Activated CD4-positive, alpha-beta T cell treated with anti-CD3 and anti-CD28 coated beads, Interleukin-2, amount 10 ng/mL, durations not matched to agents 24 days and 14 days (primary cell): ENCODE measurements at regions of chr1 and their contacts with region 1.

Region 1: DNA sequence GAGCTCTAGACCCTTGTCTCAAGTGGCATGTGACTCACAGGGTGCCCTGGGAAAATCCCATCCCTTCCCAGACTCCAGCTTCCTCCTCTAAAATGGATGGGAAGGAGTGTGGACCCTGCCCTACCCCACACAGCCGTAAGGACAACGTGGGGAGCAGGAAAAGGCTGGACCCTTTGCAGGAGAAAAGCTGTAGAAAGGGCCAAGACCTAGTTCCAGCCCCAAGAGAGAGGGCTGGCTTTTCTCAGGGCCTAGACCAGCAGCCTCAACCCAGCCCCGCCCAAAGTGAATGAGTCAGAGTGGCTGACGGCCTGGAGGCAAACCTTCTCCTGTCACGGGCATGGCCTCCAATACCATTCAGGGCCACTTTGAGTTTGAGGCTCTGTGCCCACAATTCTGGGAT is 1.1 kb downstream of the LAMB3 start:
- DNase-seq: peak; percentile 92
- H3K4me3 Mint-ChIP-seq: peak overlapping the region; percentile 56
- H3K27ac Mint-ChIP-seq: peak overlapping the region; percentile 73
- H3K4me1 Mint-ChIP-seq: peaks cover 64% of the 10 kb centered on the region
- H3K27me3 Mint-ChIP-seq: no peaks in the 10 kb centered on the region

Region 2: GRCh38 chr1:209607102-209607794 is 43.9 kb before region 1 on chr1:
- intact Hi-C with region 1: loop called (anchors 1 kb)
- DNase-seq: peak; percentile 71
- H3K4me3 Mint-ChIP-seq: peak overlapping the region; percentile 17
- H3K27ac Mint-ChIP-seq: peak overlapping the region; percentile 45
- H3K4me1 Mint-ChIP-seq: peaks cover 10% of the 10 kb centered on the region
- H3K27me3 Mint-ChIP-seq: no peaks in the 10 kb centered on the region

Region 3: GRCh38 chr1:209627732-209628196 is 23.4 kb before region 1 on chr1:
- intact Hi-C with region 1: no loop called
- DNase-seq: peak; percentile 94
- H3K4me3 Mint-ChIP-seq: no peak overlapping the region
- H3K27ac Mint-ChIP-seq: peak overlapping the region; percentile 38
- H3K4me1 Mint-ChIP-seq: peaks cover 8% of the 10 kb centered on the region
- H3K27me3 Mint-ChIP-seq: no peaks in the 10 kb centered on the region